Lower leg skin (tissue), 4 donors: ENCODE measurements at regions of chr9 and their contacts with region 1.

Region 1: DNA sequence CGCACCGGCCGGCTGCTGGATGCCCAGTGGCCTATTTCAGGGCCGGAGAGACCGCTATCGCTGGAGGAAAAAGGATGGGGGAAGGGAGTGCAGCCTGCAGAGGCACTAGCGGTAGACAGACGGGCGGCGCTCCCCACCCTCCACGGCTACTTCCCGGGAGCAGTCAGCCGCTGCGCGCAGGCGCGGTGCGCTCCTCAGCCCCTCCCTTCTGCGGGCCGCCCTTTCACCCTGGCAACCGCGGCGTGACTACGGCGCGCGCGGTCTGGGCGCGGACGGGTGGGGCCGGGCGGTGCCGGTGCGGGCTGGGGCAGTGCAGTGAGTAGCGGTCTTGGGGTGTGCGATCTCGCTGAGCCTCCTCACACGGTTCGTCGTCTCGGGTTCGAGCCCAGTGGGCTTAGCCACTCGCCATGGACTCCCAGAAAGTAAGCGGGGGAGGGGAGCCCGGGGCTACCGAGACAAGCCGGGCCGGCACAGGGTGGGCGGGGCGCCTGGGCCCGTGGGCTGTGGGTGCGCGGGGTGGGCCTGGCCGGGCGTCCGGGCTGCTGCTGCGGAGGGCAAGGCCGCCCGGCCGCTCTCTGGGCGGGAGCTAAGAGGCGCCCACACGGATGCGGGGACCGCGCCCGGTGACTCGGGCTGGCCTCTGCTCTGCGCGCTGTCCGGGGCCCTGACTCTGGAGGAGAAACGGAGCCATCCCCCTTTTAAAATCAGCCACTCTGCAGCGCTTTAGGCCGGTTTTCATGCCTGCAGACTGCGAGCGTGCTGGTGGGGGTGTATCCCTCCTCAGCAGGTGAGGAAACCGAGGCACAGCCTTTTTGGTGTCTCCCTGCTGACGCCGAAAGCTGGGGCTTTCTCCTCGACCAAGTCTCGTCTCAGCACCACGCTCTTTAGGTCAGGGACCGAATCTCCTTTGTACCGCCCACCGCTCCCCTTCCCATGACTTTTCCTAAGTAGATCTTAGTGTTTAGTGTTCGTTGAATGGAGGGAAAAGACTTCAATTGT is at the start of gene FSD1L:
- DNase-seq: peak; percentile 81 to 98
- H3K4me3 ChIP-seq: peak within 1 kb of the TSS; percentile 63
- CTCF ChIP-seq: no peak
- POLR2A ChIP-seq: no peak
- total RNA-seq, gene FSD1L: 0.23 to 2.2 (median 1.1) TPM

Region 2: GRCh38 chr9:105515811-105516413 is 67.8 kb after region 1 on chr9:
- intact Hi-C with region 1: loop called (anchors 2 kb)
- DNase-seq: no peak
- H3K4me3 ChIP-seq: no peak overlapping the region
- CTCF ChIP-seq: no peak
- POLR2A ChIP-seq: no peak